Astrocyte of the cerebellum (primary cell): ENCODE measurements at regions of chr12 and their contacts with region 1.

Region 1: DNA sequence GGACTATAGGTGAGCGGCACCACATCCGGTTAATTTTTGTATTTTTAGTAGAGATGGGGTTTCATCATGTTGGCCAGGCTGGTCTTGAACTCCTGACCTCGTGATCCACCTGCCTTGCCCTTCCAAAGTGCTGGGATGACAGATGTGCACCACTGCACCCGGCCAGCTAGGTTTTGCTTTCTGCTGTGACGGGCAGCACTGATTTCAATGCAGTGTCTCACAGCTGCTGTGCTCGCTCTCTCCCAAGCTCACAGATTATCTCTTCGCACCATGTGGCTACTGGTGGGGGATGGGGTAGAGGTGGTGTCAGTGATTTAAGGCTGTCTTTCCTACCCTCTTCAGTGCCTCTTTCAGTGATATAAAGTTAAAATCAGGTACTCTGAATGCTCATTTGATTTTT is 909.1 kb downstream of the TRHDE start:
- DNase-seq: no peak
- H3K4me3 ChIP-seq: no peak overlapping the region
- CTCF ChIP-seq: no peak

Region 2: GRCh38 chr12:73266206-73266605 is 85.0 kb after region 1 on chr12:
- in situ Hi-C with region 1: loop called (anchors 5 kb)
- DNase-seq: no peak
- H3K4me3 ChIP-seq: no peak overlapping the region
- CTCF ChIP-seq: no peak